Right ventricle myocardium superior (tissue), 1 donor: ENCODE measurements at regions of chr12 and their contacts with region 1.

Region 1: DNA sequence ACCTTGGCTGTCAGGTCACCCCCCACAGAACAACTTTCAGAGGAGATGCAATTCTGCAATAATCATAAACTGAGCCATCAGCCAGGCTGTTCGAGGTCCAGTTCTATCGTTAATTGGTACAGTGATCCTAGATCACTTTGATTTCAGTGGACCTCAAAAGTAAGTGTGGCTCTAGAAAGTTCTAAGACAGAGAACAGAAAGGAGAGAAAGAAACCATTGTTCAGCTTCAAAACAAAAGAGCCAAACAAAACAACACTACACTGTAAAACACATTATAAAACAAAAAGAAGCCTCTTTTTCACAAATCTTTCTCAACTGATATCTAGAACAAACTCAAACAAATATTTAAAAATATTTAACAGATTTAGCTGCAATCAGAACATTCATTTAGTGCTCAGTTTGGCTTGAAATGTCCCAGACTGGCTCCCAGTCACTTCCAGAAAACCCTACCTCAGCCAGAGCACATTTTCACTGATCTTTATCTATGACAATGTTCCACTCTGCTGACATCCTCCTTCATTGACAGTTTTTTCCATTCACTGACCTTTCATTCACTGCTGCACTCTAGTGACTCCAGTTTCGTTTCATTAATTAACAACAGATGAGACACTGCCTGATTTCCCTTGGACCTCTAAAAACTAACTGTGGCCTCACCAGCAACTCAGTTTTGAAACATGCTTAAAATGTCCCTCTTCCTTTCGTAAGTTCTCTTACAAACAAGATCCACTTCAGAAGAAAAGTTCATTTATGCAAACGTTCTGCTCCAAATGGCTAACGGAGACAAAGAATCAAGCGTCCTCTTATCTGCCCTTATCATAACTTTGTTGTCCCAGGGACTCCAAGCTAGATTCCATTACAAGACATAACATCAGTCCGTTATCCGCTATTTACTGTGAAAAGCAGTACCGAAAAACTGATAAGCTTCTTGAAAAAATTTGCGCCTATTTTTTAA is 56.8 kb downstream of the DUSP16 start:
- DNase-seq: no peak
- ATAC-seq: peak; percentile 79

Region 2: GRCh38 chr12:12562585-12563261 is 56.9 kb after region 1 on chr12 and contains the start of gene DUSP16:
- intact Hi-C with region 1: loop called (anchors 5 kb)
- DNase-seq: peak; percentile 94
- ATAC-seq: peak; percentile 96
- total RNA-seq, gene DUSP16: 12.5 TPM

Region 3: GRCh38 chr12:12673296-12673695 is 167.5 kb after region 1 on chr12:
- intact Hi-C with region 1: no loop called
- DNase-seq: no peak
- ATAC-seq: no peak